Mammary epithelial cell (primary cell): ENCODE measurements at regions of chr15 and their contacts with region 1.

Region 1: DNA sequence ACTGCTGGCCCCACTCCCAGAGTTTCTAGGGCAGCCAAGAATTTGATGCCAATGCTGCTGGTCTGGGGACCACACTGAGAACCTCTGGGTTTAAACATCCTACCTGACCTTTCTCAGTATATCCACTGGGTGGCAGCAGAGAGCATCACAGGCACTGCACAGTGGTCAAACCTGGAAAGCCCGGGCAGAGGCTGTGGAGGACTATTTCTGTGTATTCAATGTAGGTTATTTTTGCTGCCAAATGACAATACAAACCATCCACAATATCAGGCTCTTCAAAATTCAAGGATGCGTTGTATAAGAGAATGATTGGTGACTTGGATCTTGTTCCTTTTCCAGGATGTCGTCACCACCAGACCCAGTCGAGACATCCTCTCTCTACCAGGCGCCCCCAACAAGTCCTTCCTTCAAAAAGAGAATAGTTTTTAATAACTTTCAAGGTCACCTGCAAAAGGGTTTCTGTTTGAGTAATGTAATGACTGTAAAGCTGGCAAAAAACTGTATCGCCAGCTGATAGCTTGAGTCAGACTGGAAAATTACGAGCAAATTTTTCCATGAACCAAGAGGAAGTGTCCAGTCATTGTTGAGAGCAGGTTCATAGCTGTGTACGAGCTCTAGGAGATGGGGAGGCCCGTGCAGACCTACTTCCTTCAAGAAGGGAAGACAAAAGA is 30.5 kb upstream of the MYZAP start:
- DNase-seq: peak; percentile 75
- H3K4me3 ChIP-seq: no peak overlapping the region
- H3K27ac ChIP-seq: peak overlapping the region; percentile 40
- H3K4me1 ChIP-seq: peaks cover 15% of the 10 kb centered on the region
- H3K27me3 ChIP-seq: no peaks in the 10 kb centered on the region
- CTCF ChIP-seq: peak; percentile 76 to 90

Region 2: GRCh38 chr15:57364282-57365007 is 196.7 kb before region 1 on chr15:
- CTCF ChIA-PET with region 1: no interaction called
- dilution Hi-C with region 1: no loop called
- in situ Hi-C with region 1: no loop called
- intact Hi-C with region 1: no loop called
- DNase-seq: no peak
- H3K4me3 ChIP-seq: no peak overlapping the region
- H3K27ac ChIP-seq: no peak overlapping the region
- H3K4me1 ChIP-seq: no peaks in the 10 kb centered on the region
- H3K27me3 ChIP-seq: no peaks in the 10 kb centered on the region
- CTCF ChIP-seq: no peak

Region 3: GRCh38 chr15:57591646-57592367 is 30.6 kb after region 1 on chr15 and contains the start of gene MYZAP:
- CTCF ChIA-PET with region 1: no interaction called
- dilution Hi-C with region 1: no loop called
- in situ Hi-C with region 1: no loop called
- intact Hi-C with region 1: loop called (anchors 2 kb)
- DNase-seq: no peak
- H3K4me3 ChIP-seq: peak within 1 kb of the TSS; percentile 47 to 60 (median 59)
- H3K27ac ChIP-seq: no peak within 1 kb of the TSS
- H3K4me1 ChIP-seq: peaks cover 13% of the 10 kb centered on the region
- H3K27me3 ChIP-seq: no peaks in the 10 kb centered on the region
- CTCF ChIP-seq: no peak
- total RNA-seq, gene MYZAP: 1.0 to 4.8 TPM

Region 4: DNA sequence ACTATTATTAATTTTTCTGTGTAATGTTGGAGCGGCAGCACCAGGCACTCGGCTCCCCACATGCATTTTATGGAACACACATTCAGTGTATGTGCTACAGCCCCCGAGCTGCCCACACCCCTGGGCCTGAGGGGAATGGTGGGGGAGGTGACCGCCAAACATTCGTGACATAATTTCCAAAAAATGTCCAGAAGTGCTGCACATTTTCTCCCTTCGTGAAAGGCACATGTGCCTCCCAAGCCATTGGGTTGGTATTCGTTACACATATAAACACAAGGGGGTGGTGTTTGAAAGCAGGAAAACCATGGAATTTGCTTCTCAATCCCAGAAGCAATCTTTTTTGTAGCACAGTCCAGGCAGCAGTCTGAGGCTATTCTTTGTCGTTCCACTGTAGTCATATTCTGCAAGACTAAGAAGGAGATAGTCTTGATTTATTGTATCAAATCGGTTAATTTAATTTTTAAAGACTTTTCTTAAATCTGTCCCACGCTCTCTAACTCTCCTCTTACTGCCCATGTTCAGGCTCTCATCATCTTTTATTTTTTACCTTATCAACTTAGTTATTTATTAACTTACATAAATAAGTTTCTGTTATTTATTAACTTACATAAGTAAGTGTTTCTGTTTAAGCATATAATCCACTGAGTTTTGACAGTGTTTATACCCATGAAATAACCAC is 106.1 kb after region 1 on chr15:
- CTCF ChIA-PET with region 1: no interaction called
- dilution Hi-C with region 1: no loop called
- in situ Hi-C with region 1: no loop called
- intact Hi-C with region 1: loop called (anchors 2 kb)
- DNase-seq: peak; percentile 50
- H3K4me3 ChIP-seq: no peak overlapping the region
- H3K27ac ChIP-seq: peak overlapping the region; percentile 6
- H3K4me1 ChIP-seq: peaks cover 18% of the 10 kb centered on the region
- H3K27me3 ChIP-seq: no peaks in the 10 kb centered on the region
- CTCF ChIP-seq: peak; percentile 47 to 64

Region 5: DNA sequence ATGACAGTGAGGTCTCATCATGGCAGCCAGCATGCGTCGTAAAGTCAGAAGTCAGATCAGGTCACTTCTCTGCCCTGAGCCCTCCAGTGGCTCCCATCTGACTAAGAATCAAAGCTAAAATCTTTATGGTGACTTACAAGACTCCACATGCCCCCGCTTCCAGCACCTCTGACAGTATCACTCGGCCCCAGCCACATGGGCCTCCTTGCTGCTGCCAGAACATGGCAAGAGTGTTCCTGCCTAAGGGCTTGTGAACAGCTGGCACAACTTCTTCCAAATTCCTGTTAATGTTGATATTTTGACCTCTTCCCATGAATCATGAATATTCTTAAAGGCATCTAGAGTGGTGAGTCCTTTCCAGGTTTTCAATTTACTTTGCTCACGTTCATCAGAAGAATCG is 165.9 kb after region 1 on chr15:
- CTCF ChIA-PET with region 1: no interaction called
- dilution Hi-C with region 1: no loop called
- in situ Hi-C with region 1: no loop called
- intact Hi-C with region 1: loop called (anchors 5 kb)
- DNase-seq: peak; percentile 96
- H3K4me3 ChIP-seq: no peak overlapping the region
- H3K27ac ChIP-seq: peak overlapping the region; percentile 37
- H3K4me1 ChIP-seq: peaks cover 29% of the 10 kb centered on the region
- H3K27me3 ChIP-seq: no peaks in the 10 kb centered on the region
- CTCF ChIP-seq: no peak

Region 6: DNA sequence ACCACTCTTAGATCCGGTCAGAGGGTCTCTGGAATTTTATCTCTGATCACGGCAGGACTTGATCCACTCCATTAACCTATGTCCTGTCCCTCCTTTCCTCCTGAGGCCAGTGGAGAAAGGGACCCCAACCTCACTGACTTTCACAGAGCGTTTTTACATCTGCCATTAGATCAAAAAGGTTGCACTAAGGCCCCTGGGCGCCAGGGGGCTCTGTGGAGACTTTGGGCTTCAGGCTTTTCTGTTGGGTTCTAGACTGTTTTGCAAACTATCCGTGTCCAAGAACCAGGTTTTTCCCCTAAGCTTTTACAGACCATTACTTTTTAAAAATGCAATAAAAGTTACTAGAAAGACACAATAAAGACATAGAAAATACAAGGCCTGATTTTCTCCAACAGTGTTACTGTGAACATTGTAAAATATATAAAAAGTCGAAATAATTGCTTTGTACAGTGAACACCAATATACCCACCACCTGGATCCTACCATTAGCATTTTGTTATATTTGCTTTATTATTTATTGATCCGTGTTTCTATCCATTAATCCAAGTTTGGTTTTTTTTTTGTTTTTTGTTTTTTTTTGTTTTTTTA is 305.1 kb after region 1 on chr15:
- CTCF ChIA-PET with region 1: no interaction called
- dilution Hi-C with region 1: no loop called
- in situ Hi-C with region 1: loop called in 1 of 2 experiments (anchors 10 kb)
- intact Hi-C with region 1: loop called (anchors 2 kb)
- DNase-seq: peak; percentile 36
- H3K4me3 ChIP-seq: no peak overlapping the region
- H3K27ac ChIP-seq: no peak overlapping the region
- H3K4me1 ChIP-seq: no peaks in the 10 kb centered on the region
- H3K27me3 ChIP-seq: no peaks in the 10 kb centered on the region
- CTCF ChIP-seq: peak; percentile 92 to 93

Region 7: GRCh38 chr15:58182460-58183163 is 621.4 kb after region 1 on chr15:
- CTCF ChIA-PET with region 1: no interaction called
- dilution Hi-C with region 1: no loop called
- in situ Hi-C with region 1: no loop called
- intact Hi-C with region 1: loop called (anchors 5 kb)
- DNase-seq: peak; percentile 45
- H3K4me3 ChIP-seq: no peak overlapping the region
- H3K27ac ChIP-seq: no peak overlapping the region
- H3K4me1 ChIP-seq: peaks cover 22% of the 10 kb centered on the region
- H3K27me3 ChIP-seq: no peaks in the 10 kb centered on the region
- CTCF ChIP-seq: peak; percentile 97 to 99